Activated B cell treated with CpG ODN at 0.5 μM for 24 hours (primary cell): ENCODE measurements at regions of chr18 and their contacts with region 1.

Region 1: DNA sequence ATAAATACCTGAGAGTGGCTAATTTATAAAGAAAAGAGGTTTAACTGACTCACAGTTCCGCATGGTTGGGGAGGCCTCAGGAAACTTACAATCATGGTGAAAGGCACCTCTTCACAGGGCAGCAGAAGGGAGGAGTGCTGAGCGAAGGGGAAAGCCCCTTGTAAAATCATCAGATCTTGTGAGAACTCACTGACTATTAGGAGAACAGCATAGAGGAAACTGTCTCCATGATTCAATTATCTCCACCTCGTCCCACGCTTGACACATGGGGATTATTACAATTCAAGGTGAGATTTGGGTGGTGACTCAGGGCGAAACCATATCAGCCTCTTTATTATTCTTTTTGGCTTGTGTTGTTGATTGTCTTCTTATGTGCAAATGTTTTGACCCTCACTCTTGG is 76.2 kb downstream of the WDR7 start:
- DNase-seq: no peak
- ATAC-seq: no peak
- H3K4me3 Mint-ChIP-seq: no peak overlapping the region
- H3K27ac Mint-ChIP-seq: no peak overlapping the region
- H3K4me1 Mint-ChIP-seq: no peaks in the 10 kb centered on the region
- H3K27me3 Mint-ChIP-seq: no peaks in the 10 kb centered on the region
- CTCF ChIP-seq: no peak

Region 2: DNA sequence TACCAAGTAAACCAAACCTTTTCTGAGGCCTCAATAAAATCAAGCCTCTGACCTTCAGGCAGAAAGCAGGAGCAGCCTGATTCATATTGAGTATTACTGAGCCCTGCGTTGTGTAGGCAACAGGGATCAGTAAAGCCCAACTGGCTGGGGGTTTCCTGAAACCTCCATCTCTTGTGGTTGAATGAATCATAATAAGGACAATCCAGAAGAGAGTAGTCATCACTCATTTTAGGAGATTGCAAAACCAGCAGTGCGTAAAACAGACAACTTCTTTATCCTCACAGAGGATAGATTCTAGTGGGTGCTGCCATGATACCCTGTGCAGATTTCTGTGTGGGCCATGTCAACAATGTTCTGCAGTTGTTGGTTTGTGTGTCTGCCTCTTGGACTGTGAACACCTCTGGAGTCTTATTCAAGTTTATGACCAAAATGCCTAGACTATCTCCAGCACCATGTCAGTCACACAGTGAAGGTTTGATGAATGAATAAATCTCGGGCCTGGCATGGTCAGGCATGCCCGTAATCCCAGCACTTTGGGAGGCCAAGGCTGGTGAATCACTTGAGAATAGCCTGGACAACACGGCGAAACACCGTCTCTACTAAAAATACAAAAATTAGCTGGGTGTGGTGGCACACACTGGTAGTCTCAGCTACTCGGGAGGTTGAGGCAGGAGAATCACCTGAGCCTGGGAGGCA is 1951.0 kb before region 1 on chr18:
- CTCF ChIA-PET with region 1: no interaction called
- POLR2A ChIA-PET with region 1: no interaction called
- intact Hi-C with region 1: loop called (anchors 5 kb)
- DNase-seq: no peak
- ATAC-seq: peak; percentile 21
- H3K4me3 Mint-ChIP-seq: no peak overlapping the region
- H3K27ac Mint-ChIP-seq: no peak overlapping the region
- H3K4me1 Mint-ChIP-seq: no peaks in the 10 kb centered on the region
- H3K27me3 Mint-ChIP-seq: no peaks in the 10 kb centered on the region
- CTCF ChIP-seq: no peak